ENCODE measurements at regions of chr11 and their contacts with region 1.

Region 1: GRCh38 chr11:126318574-126319373 is 14.9 kb downstream of the DCPS start:
- DNase-seq: peak; percentile 53
- H3K4me3 Mint-ChIP-seq: peak overlapping the region; percentile 44
- H3K27ac Mint-ChIP-seq: peak overlapping the region; percentile 43
- H3K4me1 Mint-ChIP-seq: peaks cover 32% of the 10 kb centered on the region
- H3K27me3 Mint-ChIP-seq: no peaks in the 10 kb centered on the region

Region 2: GRCh38 chr11:126194121-126194543 is 124.6 kb before region 1 on chr11:
- CTCF ChIA-PET with region 1: no interaction called
- intact Hi-C with region 1: no loop called
- DNase-seq: peak; percentile 63
- H3K4me3 Mint-ChIP-seq: no peak overlapping the region
- H3K27ac Mint-ChIP-seq: no peak overlapping the region
- H3K4me1 Mint-ChIP-seq: no peaks in the 10 kb centered on the region
- H3K27me3 Mint-ChIP-seq: no peaks in the 10 kb centered on the region

Region 3: GRCh38 chr11:126303623-126304456 is 14.9 kb before region 1 on chr11 and contains the start of gene DCPS:
- CTCF ChIA-PET with region 1: interaction called, 7 read pairs
- intact Hi-C with region 1: loop called (anchors 1 kb)
- DNase-seq: peak; percentile 86
- H3K4me3 Mint-ChIP-seq: peak within 1 kb of the TSS; percentile 95
- H3K27ac Mint-ChIP-seq: peak within 1 kb of the TSS; percentile 97
- H3K4me1 Mint-ChIP-seq: peaks cover 35% of the 10 kb centered on the region
- H3K27me3 Mint-ChIP-seq: no peaks in the 10 kb centered on the region
- total RNA-seq, gene DCPS: 34.9 to 39.5 TPM

Region 4: GRCh38 chr11:126345759-126346585 is 27.2 kb after region 1 on chr11:
- CTCF ChIA-PET with region 1: no interaction called
- intact Hi-C with region 1: no loop called
- DNase-seq: peak; percentile 44
- H3K4me3 Mint-ChIP-seq: no peak overlapping the region
- H3K27ac Mint-ChIP-seq: peak overlapping the region; percentile 83
- H3K4me1 Mint-ChIP-seq: peaks cover 30% of the 10 kb centered on the region
- H3K27me3 Mint-ChIP-seq: no peaks in the 10 kb centered on the region

Region 5: DNA sequence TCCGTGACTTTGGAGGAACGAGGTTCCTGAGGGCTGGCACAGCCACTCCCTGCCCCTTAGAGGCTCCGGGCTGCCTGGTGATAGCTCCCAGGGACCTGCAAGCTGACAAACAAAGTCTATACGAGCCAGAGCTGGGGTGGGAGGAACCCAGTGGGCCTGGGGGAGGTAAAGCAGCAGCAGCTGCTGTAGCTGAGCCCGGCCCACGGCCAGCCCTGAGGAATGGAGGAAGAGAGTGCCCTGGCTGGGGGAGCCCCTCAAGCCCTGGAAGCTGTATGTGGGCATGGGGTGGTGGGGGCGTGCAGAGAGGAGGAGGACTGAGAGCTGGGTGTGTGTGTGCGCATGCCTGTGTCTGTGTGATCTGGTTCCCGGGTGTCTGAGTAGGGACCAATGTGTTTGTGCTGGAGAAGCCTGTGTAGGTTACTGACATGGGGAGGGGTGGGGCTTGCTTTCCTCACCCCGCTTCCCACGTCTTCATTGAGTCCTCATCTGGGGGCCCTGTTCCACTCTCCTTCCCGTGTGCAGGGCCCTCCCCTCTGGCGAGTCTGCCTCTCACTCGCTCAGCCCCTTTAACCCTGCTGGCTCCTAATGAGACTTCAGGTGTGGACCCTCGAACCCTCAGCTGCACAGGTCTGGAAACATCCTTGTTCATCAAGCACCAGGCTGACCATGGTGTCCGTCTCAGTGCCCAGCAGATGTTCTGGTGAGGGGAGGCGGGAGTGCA is 47.5 kb after region 1 on chr11:
- CTCF ChIA-PET with region 1: no interaction called
- intact Hi-C with region 1: no loop called
- DNase-seq: no peak
- H3K4me3 Mint-ChIP-seq: no peak overlapping the region
- H3K27ac Mint-ChIP-seq: no peak overlapping the region
- H3K4me1 Mint-ChIP-seq: peaks cover 7% of the 10 kb centered on the region
- H3K27me3 Mint-ChIP-seq: no peaks in the 10 kb centered on the region

Region 6: GRCh38 chr11:126416542-126417090 is 97.8 kb after region 1 on chr11:
- CTCF ChIA-PET with region 1: interaction called, 3 read pairs
- intact Hi-C with region 1: loop called (anchors 5 kb)
- DNase-seq: peak; percentile 83
- H3K4me3 Mint-ChIP-seq: peak overlapping the region; percentile 56
- H3K27ac Mint-ChIP-seq: no peak overlapping the region
- H3K4me1 Mint-ChIP-seq: peaks cover 14% of the 10 kb centered on the region
- H3K27me3 Mint-ChIP-seq: no peaks in the 10 kb centered on the region

Measured in activated naive CD4-positive, alpha-beta T cell treated with anti-CD3 and anti-CD28 coated beads for 36 hours (primary cell).